GM23248 (cell line): ENCODE measurements at regions of chr14 and their contacts with region 1.

Region 1: DNA sequence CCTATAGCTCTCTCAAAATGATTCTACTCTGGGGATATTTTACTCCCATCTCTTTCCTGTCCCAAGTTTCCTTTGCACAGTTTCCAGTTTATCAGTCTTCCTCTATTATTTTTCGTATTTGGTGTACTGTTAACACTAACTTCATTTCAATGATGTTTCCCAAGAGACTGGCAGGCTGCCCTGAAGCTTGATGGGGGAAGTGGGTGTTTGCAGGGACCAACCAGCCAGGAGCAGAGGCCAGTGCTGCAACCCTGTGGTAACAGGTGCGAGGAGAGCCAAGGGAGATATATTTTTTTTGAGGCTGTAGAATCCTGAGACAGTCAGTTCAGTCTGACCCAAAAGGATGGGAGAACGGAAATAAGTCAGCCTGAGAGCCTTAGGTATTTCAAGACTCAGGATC is 11.8 kb upstream of the CEBPE start:
- DNase-seq: no peak
- H3K4me3 ChIP-seq: no peak overlapping the region
- H3K27ac ChIP-seq: no peak overlapping the region
- H3K4me1 ChIP-seq: no peaks in the 10 kb centered on the region
- H3K27me3 ChIP-seq: no peaks in the 10 kb centered on the region

Region 2: DNA sequence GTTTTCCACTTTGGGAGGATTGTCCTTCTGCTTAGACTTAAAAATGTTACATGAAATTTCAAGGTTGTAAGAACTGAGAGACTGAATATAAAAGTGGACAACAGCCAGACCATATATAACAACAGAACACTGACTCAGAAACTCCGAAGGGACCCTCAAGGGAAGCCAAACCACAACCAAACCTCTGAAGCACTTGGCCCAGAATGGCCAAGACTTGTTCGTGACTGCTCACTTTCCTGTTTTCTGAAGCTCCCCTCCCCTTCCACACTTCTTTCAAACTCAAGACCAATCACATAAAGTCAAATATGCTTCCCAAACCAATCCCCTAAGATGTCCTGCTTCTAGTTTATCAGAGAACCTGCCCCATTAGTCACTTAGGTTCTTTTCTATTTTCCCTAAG is 500.4 kb before region 1 on chr14:
- in situ Hi-C with region 1: no loop called
- DNase-seq: peak; percentile 81
- H3K4me3 ChIP-seq: no peak overlapping the region
- H3K27ac ChIP-seq: no peak overlapping the region; the same call in 1 of the 2 replicates
- H3K4me1 ChIP-seq: no peaks in the 10 kb centered on the region
- H3K27me3 ChIP-seq: no peaks in the 10 kb centered on the region

Region 3: DNA sequence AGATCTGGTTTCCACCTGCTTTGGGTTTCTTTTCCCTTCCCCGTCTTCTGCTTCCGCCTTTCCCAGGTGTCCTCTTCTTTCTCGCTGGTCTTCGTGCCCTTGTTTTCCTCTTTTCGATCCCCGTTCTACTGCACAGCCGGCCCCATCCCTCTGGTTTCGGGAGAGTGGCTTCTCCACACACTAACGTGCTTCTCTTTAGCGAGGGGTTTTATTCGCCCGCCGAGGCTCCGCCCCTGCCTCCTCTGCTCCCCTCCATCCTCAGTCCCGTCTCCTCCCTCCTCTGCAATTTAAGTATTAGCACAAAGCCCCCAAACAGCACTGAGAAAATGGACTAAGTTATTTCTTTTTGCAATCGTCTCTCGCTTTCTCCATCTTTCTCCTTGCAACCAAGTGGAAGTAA is 52.6 kb after region 1 on chr14 and contains the start of gene SLC7A8:
- in situ Hi-C with region 1: loop called (anchors 5 kb)
- DNase-seq: peak; percentile 48
- H3K4me3 ChIP-seq: peak within 1 kb of the TSS; percentile 79
- H3K27ac ChIP-seq: no peak within 1 kb of the TSS
- H3K4me1 ChIP-seq: peaks cover 15% of the 10 kb centered on the region; the same call in 1 of the 2 replicates
- H3K27me3 ChIP-seq: no peaks in the 10 kb centered on the region
- total RNA-seq, gene SLC7A8: 2.7 and 6.7 TPM in 2 replicates